GM12878 (cell line): ENCODE measurements at regions of chr18 and their contacts with region 1.

Region 1: DNA sequence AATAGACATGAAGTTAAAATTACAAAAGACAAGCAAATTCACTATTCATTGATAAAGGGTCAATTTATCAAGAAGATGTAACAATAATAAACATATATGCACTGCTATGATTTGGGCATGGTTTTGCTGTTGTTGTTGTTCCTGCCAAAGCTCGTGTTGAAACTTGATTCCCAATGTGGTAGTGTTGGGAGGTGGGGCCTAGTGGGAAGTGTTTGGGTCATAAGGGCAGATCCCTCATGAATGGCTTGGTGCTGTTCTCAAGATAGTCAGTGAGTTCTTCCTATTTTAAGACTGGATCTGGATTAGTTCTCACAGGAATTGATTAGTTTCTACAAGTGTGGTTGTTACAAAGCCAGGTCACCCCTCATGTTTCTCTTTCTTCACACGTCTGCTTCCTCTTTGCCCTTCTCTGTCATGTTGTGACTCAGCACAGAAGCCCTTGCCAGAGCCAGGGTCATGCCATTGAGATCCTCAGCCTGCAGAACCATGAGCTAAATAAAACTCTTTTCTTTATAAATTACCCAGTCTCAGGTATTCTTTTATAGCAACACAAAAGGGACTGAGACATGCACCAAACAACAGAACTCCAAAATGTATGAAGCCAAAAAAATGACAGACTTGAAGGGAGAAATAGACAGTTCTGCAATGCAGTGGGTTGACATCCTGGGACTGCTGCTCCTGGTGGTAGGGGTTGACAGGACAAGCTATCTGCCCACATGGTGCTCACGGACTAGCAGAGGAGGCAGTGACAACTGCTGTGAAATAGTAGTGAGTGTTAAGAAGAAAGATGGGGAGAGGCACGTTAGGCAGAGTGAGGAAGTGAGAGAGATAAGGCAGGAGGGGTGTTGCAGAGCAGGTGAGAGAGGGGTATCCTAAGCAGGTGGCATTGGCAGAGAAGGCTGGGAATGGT is 18.6 kb upstream of the SKA1 start:
- DNase-seq: peak; percentile 79
- ATAC-seq: peak; percentile 93
- H3K4me3 ChIP-seq: no peak overlapping the region
- H3K27ac ChIP-seq: peak overlapping the region; percentile 86
- H3K4me1 ChIP-seq: peaks cover 15% of the 10 kb centered on the region
- H3K27me3 ChIP-seq: no peaks in the 10 kb centered on the region; a peak in 1 of 4 replicates
- CTCF ChIP-seq: peak; percentile 18 to 50 (median 41); a peak in 5 of 6 replicates
- EP300 ChIP-seq: peak; percentile 21 to 39; a peak in 2 of 4 replicates
- POLR2A ChIP-seq: no peak
- RAD21 ChIP-seq: peak; percentile 50

Region 2: DNA sequence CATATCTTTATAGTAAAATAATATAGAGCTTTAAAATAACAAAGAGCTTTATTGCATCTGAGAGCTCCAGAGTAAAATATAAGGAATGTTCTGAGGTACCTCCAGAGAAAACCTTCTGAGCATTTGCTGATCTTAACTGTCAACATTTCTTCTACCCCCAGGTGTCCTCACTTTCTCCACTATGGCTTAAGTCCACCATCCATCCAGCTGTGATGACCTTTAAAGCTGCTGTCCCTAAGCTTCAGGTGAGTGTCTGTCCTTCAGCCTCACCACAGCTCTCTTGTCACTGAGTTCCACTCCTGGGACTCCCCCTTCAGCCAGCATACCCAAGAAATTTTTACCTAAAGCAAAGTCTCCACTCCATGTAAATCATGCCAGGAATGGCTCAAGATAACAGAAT is 299.3 kb before region 1 on chr18:
- CTCF ChIA-PET with region 1: interaction called, 7 read pairs
- POLR2A ChIA-PET with region 1: no interaction called
- RAD21 ChIA-PET with region 1: no interaction called
- SMC1A ChIA-PET with region 1: interaction called, 10 read pairs
- in situ Hi-C with region 1: no loop called
- intact Hi-C with region 1: no loop called
- DNase-seq: no peak
- ATAC-seq: no peak
- H3K4me3 ChIP-seq: no peak overlapping the region
- H3K27ac ChIP-seq: no peak overlapping the region
- H3K4me1 ChIP-seq: no peaks in the 10 kb centered on the region
- H3K27me3 ChIP-seq: no peaks in the 10 kb centered on the region; a peak in 1 of 4 replicates
- CTCF ChIP-seq: 0 out of 6 replicates have a peak, but pooled peaks of 1 of the 3 experiments have one; percentile 9
- EP300 ChIP-seq: no peak
- POLR2A ChIP-seq: no peak
- RAD21 ChIP-seq: peak; percentile 38; the same call in 1 of the 2 replicates

Region 3: GRCh38 chr18:50203801-50204604 is 152.3 kb before region 1 on chr18:
- CTCF ChIA-PET with region 1: interaction called, 55 read pairs
- POLR2A ChIA-PET with region 1: interaction called, 4 read pairs
- RAD21 ChIA-PET with region 1: interaction called, 42 read pairs
- SMC1A ChIA-PET with region 1: interaction called, 59 read pairs
- in situ Hi-C with region 1: no loop called
- intact Hi-C with region 1: loop called (anchors 5 kb)
- DNase-seq: no peak
- ATAC-seq: peak; percentile 68
- H3K4me3 ChIP-seq: no peak overlapping the region
- H3K27ac ChIP-seq: no peak overlapping the region
- H3K4me1 ChIP-seq: no peaks in the 10 kb centered on the region
- H3K27me3 ChIP-seq: peaks cover 1 to 4% of the 10 kb centered on the region in 2 experiments; a peak in 2 of 4 replicates
- CTCF ChIP-seq: peak; percentile 52 to 65 (median 52); a peak in 5 of 6 replicates
- EP300 ChIP-seq: no peak
- POLR2A ChIP-seq: no peak
- RAD21 ChIP-seq: peak; percentile 72

Region 4: DNA sequence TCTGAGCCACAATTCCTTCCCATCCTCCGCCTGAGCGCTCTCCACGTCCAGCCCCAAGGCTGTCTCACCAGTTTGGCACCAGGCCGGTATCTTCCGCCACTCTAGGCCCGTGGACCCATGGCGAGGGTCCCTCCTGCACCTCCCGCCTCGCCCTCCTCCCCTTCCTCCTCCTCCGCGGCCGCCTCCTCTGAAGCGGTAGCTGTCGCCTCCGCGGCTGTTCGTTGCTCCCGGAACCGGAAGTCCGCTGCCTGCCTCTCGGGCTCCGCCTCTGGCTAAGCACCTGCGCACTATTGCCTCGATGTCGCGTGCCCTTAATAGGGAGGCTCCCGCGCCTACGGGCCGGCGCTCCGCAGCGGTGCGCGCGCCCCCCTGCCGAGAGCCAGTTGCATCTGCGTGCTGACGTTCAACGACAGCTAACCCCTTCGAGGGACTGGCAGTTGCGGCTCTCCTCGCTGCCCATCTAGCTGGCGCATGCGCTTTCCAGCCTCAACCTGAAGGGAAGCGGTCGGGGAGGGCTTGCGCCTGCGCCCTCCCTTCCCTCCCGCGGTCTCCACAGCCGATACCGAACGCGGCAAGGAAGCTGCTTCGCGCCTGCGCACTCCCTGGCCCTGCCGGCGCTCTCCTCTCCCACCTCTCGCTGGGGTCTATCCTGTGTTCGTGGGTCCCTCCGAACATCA is 74.9 kb before region 1 on chr18 and contains the start of gene MBD1:
- CTCF ChIA-PET with region 1: interaction called, 37 read pairs
- POLR2A ChIA-PET with region 1: interaction called, 12 read pairs
- RAD21 ChIA-PET with region 1: interaction called, 49 read pairs
- SMC1A ChIA-PET with region 1: interaction called, 27 read pairs
- in situ Hi-C with region 1: loop called (anchors 10 kb)
- intact Hi-C with region 1: no loop called
- DNase-seq: peak; percentile 96
- ATAC-seq: peak; percentile 96
- H3K4me3 ChIP-seq: peak within 1 kb of the TSS; percentile 99
- H3K27ac ChIP-seq: peak within 1 kb of the TSS; percentile 88
- H3K4me1 ChIP-seq: peaks cover 16% of the 10 kb centered on the region
- H3K27me3 ChIP-seq: no peaks in the 10 kb centered on the region
- CTCF ChIP-seq: peak in 2 of 3 experiments; percentile 17 to 26; a peak in 1 of 6 replicates
- EP300 ChIP-seq: no peak
- POLR2A ChIP-seq: no peak
- RAD21 ChIP-seq: no peak
- polyA plus RNA-seq, gene MBD1: 8.4 to 12.4 TPM

Region 5: GRCh38 chr18:50315100-50315871 is 41.0 kb before region 1 on chr18:
- CTCF ChIA-PET with region 1: interaction called, 83 read pairs
- POLR2A ChIA-PET with region 1: interaction called, 32 read pairs
- RAD21 ChIA-PET with region 1: interaction called, 125 read pairs
- SMC1A ChIA-PET with region 1: interaction called, 145 read pairs
- in situ Hi-C with region 1: no loop called
- intact Hi-C with region 1: loop called (anchors 1 kb)
- DNase-seq: peak; percentile 97
- ATAC-seq: peak; percentile 89
- H3K4me3 ChIP-seq: peak overlapping the region; percentile 22
- H3K27ac ChIP-seq: peak overlapping the region; percentile 95
- H3K4me1 ChIP-seq: peaks cover 72% of the 10 kb centered on the region
- H3K27me3 ChIP-seq: no peaks in the 10 kb centered on the region
- CTCF ChIP-seq: no peak
- EP300 ChIP-seq: peak in 1 of 2 experiments; percentile 73; a peak in 2 of 4 replicates
- POLR2A ChIP-seq: no peak
- RAD21 ChIP-seq: 0 out of 2 replicates have a peak, but pooled peaks have one; percentile 20

Region 6: GRCh38 chr18:50340078-50340477 is 16.2 kb before region 1 on chr18:
- CTCF ChIA-PET with region 1: interaction called, 16 read pairs
- POLR2A ChIA-PET with region 1: interaction called, 9 read pairs
- RAD21 ChIA-PET with region 1: interaction called, 23 read pairs
- SMC1A ChIA-PET with region 1: interaction called, 66 read pairs
- in situ Hi-C with region 1: no loop called
- intact Hi-C with region 1: no loop called
- DNase-seq: no peak
- ATAC-seq: no peak
- H3K4me3 ChIP-seq: no peak overlapping the region
- H3K27ac ChIP-seq: no peak overlapping the region
- H3K4me1 ChIP-seq: peaks cover 22% of the 10 kb centered on the region
- H3K27me3 ChIP-seq: no peaks in the 10 kb centered on the region
- CTCF ChIP-seq: peak in 2 of 3 experiments; percentile 21 to 28; a peak in 2 of 6 replicates
- EP300 ChIP-seq: no peak
- POLR2A ChIP-seq: no peak
- RAD21 ChIP-seq: no peak